B cell (primary cell): ENCODE measurements at regions of chr14 and their contacts with region 1.

Region 1: GRCh38 chr14:23301288-23301968 is 1.2 kb downstream of the PPP1R3E start:
- DNase-seq: peak; percentile 100
- ATAC-seq: peak; percentile 75
- H3K4me3 ChIP-seq: peak overlapping the region in 4 of 5 experiments; percentile 72 to 86 (median 82)
- H3K4me3 Mint-ChIP-seq: peak overlapping the region; percentile 98
- H3K27ac ChIP-seq: peak overlapping the region; percentile 95 to 96
- H3K27ac Mint-ChIP-seq: peak overlapping the region; percentile 95
- H3K4me1 ChIP-seq: peaks cover 24 to 26% of the 10 kb centered on the region in 2 donors
- H3K4me1 Mint-ChIP-seq: peaks cover 34% of the 10 kb centered on the region
- H3K27me3 ChIP-seq: no peaks in the 10 kb centered on the region
- H3K27me3 Mint-ChIP-seq: no peaks in the 10 kb centered on the region
- CTCF ChIP-seq: peak; percentile 81

Region 2: GRCh38 chr14:21383848-21384493 is 1917.5 kb before region 1 on chr14 and contains the start of gene SUPT16H:
- CTCF ChIA-PET with region 1: no interaction called
- POLR2A ChIA-PET with region 1: no interaction called
- intact Hi-C with region 1: loop called (anchors 5 kb)
- DNase-seq: peak; percentile 96
- ATAC-seq: peak; percentile 94
- H3K4me3 ChIP-seq: peak within 1 kb of the TSS; percentile 75 to 99 (median 98)
- H3K4me3 Mint-ChIP-seq: peak within 1 kb of the TSS; percentile 96
- H3K27ac ChIP-seq: peak within 1 kb of the TSS; percentile 82 to 94
- H3K27ac Mint-ChIP-seq: peak within 1 kb of the TSS; percentile 100
- H3K4me1 ChIP-seq: peaks cover 20 to 26% of the 10 kb centered on the region in 2 donors
- H3K4me1 Mint-ChIP-seq: peaks cover 43% of the 10 kb centered on the region
- H3K27me3 ChIP-seq: no peaks in the 10 kb centered on the region
- H3K27me3 Mint-ChIP-seq: no peaks in the 10 kb centered on the region
- CTCF ChIP-seq: no peak
- total RNA-seq, gene SUPT16H: 78.3 and 84.4 TPM in 2 replicates

Region 3: DNA sequence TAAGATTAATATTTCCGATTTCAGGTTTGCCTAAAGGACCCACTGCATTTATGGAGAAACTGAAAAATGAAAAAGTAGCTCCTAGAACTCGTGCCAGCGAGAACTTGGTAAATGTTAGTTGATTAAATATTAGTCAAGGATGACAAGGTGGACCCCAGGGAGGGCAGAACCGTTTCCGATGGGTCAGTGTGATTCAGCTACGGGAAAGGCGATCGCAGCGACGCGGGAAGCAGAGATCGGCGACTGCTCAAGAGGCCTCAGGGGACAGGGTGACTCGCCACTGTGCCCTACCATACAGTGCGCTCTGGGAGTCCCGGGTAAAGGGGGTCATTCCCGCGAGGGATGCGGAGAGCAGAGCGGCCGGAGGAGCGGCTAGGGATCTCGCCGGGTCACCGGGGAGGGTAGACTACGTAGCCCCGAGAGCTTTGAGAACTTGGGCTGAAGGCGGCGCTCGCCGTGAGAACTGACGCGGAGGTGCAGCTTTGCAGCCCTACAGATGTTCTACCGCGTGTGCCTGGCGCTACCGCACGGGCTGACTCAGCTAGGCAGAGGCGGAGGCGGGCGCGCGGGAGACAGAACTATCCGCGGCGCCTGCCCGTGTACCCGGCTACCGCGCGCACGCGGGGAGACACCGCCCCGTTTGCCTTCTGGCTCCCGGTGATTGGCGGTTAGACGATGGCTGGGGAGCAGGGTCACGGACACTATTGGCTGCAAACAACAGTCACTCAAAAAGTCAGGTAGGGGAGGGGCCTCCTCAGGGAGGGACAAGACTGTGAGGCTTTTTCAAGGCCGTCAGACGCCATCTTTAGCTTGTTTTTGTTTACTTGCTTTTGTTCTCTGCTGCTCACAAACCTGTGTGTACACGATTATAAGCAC is 294.6 kb before region 1 on chr14:
- CTCF ChIA-PET with region 1: no interaction called
- POLR2A ChIA-PET with region 1: no interaction called
- intact Hi-C with region 1: loop called (anchors 10 kb)
- DNase-seq: peak; percentile 98
- ATAC-seq: peak; percentile 91
- H3K4me3 ChIP-seq: peak overlapping the region; percentile 70 to 95 (median 85)
- H3K4me3 Mint-ChIP-seq: peak overlapping the region; percentile 99
- H3K27ac ChIP-seq: peak overlapping the region; percentile 75 to 88
- H3K27ac Mint-ChIP-seq: peak overlapping the region; percentile 98
- H3K4me1 ChIP-seq: peaks cover 24 to 32% of the 10 kb centered on the region in 2 donors
- H3K4me1 Mint-ChIP-seq: peaks cover 42% of the 10 kb centered on the region
- H3K27me3 ChIP-seq: no peaks in the 10 kb centered on the region
- H3K27me3 Mint-ChIP-seq: no peaks in the 10 kb centered on the region
- CTCF ChIP-seq: no peak

Region 4: DNA sequence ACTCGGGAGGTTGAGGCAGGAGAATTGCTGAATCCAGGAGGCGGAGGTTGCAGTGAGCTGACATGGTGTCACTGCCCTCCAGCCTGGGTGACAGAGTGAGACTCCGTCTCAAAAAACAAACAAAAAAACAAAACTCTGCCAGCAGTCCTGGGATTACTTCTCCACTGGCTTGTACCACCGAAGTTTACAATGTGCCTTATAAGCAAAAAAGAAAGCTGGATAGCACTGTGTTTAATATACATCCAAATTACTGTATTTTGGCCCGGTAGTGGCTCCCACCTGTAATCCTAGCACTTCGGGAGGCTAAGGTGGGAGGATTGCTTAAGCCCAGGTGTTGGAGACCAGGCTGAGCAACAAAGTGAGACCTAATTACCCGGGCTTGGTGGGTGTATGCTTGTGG is 32.2 kb before region 1 on chr14:
- CTCF ChIA-PET with region 1: interaction called, 4 read pairs
- POLR2A ChIA-PET with region 1: no interaction called
- intact Hi-C with region 1: loop called (anchors 1 kb)
- DNase-seq: no peak
- ATAC-seq: no peak
- H3K4me3 ChIP-seq: no peak overlapping the region
- H3K4me3 Mint-ChIP-seq: no peak overlapping the region
- H3K27ac ChIP-seq: no peak overlapping the region
- H3K27ac Mint-ChIP-seq: no peak overlapping the region
- H3K4me1 ChIP-seq: no peaks in the 10 kb centered on the region
- H3K4me1 Mint-ChIP-seq: no peaks in the 10 kb centered on the region
- H3K27me3 ChIP-seq: no peaks in the 10 kb centered on the region
- H3K27me3 Mint-ChIP-seq: peaks cover 13% of the 10 kb centered on the region
- CTCF ChIP-seq: no peak

Region 5: DNA sequence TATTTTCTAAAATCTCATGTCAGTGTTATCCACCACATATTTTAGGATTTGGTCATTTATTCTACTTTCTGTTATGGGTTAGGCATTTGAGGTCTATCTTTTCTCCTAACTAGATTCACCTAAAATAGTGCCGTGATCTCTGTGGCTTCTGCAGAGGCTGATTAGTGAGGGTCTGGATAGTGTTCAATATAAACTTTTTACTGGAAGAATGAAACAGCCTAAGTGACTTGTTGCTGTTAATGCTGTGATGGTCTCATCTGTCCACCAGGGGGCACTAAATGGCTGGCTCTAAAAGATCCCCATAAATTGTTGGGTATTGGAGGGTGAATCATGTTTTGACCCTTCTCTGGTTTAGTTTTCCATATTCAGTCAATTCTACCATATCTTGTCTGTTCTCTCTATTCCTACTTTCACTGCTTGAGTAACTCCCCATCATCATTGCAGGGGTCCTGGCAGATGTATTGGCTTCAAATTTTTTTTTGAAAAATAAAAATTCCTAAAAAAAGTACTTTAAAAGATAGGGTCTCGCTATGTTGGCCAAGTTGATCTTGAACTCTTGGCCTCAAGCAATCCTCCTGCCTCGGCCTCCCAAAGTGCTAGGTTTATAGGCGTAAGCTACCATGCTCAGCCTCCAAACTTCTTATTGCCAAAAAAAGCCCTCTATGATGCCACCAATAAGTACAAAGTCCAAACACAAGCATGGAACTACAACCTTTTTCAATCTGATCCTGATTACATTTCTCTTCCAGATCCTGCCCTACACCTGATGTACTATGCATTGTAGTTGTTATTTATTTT is 26.7 kb after region 1 on chr14:
- CTCF ChIA-PET with region 1: interaction called, 56 read pairs
- POLR2A ChIA-PET with region 1: interaction called, 84 read pairs
- intact Hi-C with region 1: no loop called
- DNase-seq: peak; percentile 77
- ATAC-seq: peak; percentile 80
- H3K4me3 ChIP-seq: no peak overlapping the region
- H3K4me3 Mint-ChIP-seq: no peak overlapping the region
- H3K27ac ChIP-seq: no peak overlapping the region
- H3K27ac Mint-ChIP-seq: peak overlapping the region; percentile 2
- H3K4me1 ChIP-seq: peaks cover 1% of the 10 kb centered on the region in 2 donors
- H3K4me1 Mint-ChIP-seq: peaks cover 7% of the 10 kb centered on the region
- H3K27me3 ChIP-seq: peaks cover 0 to 2% (median 0%) of the 10 kb centered on the region in 4 experiments
- H3K27me3 Mint-ChIP-seq: peaks cover 3% of the 10 kb centered on the region
- CTCF ChIP-seq: peak; percentile 95

Region 6: DNA sequence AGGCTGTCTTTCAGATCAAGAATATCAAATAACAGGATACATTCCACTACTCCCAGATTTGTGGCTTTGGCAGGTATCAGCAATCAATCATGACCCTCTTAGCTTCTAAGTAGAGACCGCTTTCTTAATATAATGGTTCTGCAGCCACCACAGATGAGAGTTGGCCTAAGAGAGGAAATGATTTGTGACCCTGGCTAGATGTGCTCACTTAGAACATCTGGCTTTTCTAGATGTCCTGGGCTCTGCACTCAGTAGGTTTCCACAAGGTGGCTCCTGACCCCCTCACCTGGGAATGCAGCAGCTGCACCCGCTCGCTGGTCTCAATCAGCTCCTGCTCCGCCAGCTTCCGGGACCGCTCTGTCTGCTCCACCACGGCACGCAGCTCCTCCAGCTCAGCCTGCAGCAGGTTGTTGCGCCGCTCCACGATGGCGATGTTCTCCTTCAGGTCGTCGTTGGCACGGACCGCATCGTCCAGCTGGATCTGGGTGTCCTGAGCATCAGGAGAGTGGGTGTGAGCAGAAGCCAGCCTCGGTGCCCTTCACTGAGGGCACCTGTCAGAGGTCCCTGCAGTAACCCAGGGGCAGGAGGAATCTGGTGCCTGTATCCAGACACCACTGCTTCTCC is 84.3 kb after region 1 on chr14:
- CTCF ChIA-PET with region 1: no interaction called
- POLR2A ChIA-PET with region 1: no interaction called
- intact Hi-C with region 1: no loop called
- DNase-seq: no peak
- ATAC-seq: no peak
- H3K4me3 ChIP-seq: no peak overlapping the region
- H3K4me3 Mint-ChIP-seq: no peak overlapping the region
- H3K27ac ChIP-seq: no peak overlapping the region
- H3K27ac Mint-ChIP-seq: no peak overlapping the region
- H3K4me1 ChIP-seq: no peaks in the 10 kb centered on the region
- H3K4me1 Mint-ChIP-seq: no peaks in the 10 kb centered on the region
- H3K27me3 ChIP-seq: peaks cover 0 to 12% (median 0%) of the 10 kb centered on the region in 4 experiments
- H3K27me3 Mint-ChIP-seq: peaks cover 35% of the 10 kb centered on the region
- CTCF ChIP-seq: no peak

Region 7: DNA sequence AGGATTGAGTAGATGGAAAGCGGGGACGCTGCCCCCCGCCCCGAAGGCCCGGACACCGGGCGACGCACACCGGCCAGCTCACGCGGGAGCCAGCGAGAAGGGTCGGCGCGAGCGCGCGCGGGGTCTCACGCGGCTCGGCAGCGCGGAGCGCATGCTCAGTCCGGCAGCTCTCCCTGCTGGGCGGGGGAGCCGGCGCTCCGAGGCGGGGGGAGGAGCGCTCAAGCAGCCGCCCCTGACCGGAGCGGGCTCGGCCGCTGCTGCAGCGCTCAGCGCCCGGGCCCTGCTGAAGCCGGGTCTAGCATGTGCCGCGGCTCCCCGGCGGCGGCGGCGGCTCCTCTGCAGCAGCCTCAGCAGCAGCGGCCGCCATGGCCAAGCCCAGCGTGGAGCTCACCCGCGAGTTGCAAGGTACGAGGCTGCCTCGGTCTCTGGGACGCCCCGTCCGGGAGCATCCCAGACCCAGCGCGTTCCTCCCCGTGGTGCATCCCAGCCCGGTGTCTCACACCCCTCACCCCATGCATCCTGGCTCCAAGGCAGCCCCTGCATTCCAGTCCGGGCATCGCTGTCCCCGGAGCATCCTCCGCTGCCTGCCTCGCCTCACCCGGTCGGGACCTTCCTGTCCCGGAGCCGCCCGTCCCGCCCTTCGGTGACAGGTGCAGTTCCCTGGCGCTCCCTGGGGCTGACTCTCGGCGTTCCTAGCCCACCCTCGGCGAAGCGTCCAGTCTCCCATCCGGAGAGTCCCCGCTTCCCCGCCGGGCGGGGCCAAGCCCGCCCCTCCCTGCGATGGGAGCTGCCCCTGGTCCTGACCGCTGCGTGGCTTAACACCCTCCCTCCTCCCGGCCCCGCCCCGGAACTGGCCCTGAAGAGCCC is 750.6 kb after region 1 on chr14 and contains the start of gene CARMIL3:
- CTCF ChIA-PET with region 1: no interaction called
- POLR2A ChIA-PET with region 1: no interaction called
- intact Hi-C with region 1: no loop called
- DNase-seq: peak; percentile 79
- ATAC-seq: peak; percentile 87
- H3K4me3 ChIP-seq: peak within 1 kb of the TSS; percentile 22 to 81 (median 63)
- H3K4me3 Mint-ChIP-seq: peak within 1 kb of the TSS; percentile 83
- H3K27ac ChIP-seq: peak within 1 kb of the TSS; percentile 34 to 57
- H3K27ac Mint-ChIP-seq: peak within 1 kb of the TSS; percentile 68
- H3K4me1 ChIP-seq: peaks cover 19 to 29% of the 10 kb centered on the region in 2 donors
- H3K4me1 Mint-ChIP-seq: peaks cover 41% of the 10 kb centered on the region
- H3K27me3 ChIP-seq: peaks cover 0 to 31% (median 8%) of the 10 kb centered on the region in 4 experiments
- H3K27me3 Mint-ChIP-seq: peaks cover 7% of the 10 kb centered on the region
- CTCF ChIP-seq: no peak
- total RNA-seq, gene CARMIL3: 1.0 and 1.4 TPM in 2 replicates

Region 8: GRCh38 chr14:24146978-24147760 is 845.7 kb after region 1 on chr14 and contains the start of gene RNF31:
- CTCF ChIA-PET with region 1: no interaction called
- POLR2A ChIA-PET with region 1: no interaction called
- intact Hi-C with region 1: loop called (anchors 5 kb)
- DNase-seq: peak; percentile 98
- ATAC-seq: peak; percentile 84
- H3K4me3 ChIP-seq: peak within 1 kb of the TSS; percentile 83 to 95 (median 94)
- H3K4me3 Mint-ChIP-seq: peak within 1 kb of the TSS; percentile 95
- H3K27ac ChIP-seq: peak within 1 kb of the TSS; percentile 77 to 90
- H3K27ac Mint-ChIP-seq: peak within 1 kb of the TSS; percentile 95
- H3K4me1 ChIP-seq: peaks cover 21 to 35% of the 10 kb centered on the region in 2 donors
- H3K4me1 Mint-ChIP-seq: peaks cover 50% of the 10 kb centered on the region
- H3K27me3 ChIP-seq: no peaks in the 10 kb centered on the region
- H3K27me3 Mint-ChIP-seq: no peaks in the 10 kb centered on the region
- CTCF ChIP-seq: no peak
- total RNA-seq, gene RNF31: 103 and 114 TPM in 2 replicates